CD8-positive, alpha-beta T cell (primary cell): ENCODE measurements at regions of chr2 and their contacts with region 1.

Region 1: DNA sequence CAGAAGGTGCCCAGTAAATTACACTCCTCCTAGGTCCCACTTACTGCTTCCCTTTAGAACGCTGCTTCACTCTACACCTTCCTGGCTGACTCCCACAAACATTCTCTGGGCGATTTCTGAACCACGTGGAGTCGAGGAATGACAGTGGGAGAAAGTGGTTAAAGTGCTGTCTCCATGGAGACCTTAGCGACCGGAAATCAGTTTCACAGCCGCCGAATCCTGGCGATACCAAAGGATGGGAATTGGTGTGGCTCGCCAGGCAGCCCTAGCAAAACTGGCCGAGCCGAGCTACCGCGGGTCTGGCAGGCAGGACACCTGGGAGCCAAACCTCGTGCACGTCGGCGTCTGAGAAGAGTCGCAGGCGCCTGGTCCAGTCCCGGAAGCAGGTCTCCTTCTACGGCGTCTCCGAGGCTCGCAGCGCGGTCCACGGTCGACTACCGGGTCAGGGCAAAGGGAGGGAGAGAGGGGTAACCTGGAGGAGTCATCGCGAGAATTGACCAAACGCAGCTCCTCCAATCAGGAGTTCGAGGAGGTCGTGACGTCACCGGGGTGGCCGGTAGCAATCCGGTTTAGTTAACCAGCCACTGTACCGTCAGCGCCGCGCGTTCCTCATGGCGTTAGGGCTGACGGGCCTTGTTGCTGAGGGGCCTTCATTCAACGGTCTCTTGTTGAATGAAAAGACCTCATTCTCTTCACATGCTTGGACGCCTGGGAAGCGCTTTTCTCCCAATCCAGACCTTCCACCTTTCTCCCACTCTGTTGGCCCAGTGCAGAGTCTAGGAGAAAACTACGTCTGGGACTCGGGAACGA is at the start of gene THADA:
- DNase-seq: peak; percentile 91 to 98 (median 96)
- ATAC-seq: peak; percentile 91
- H3K4me3 ChIP-seq: peak within 1 kb of the TSS; percentile 74 to 90
- H3K4me3 Mint-ChIP-seq: peak within 1 kb of the TSS; percentile 92
- H3K27ac ChIP-seq: peak within 1 kb of the TSS; percentile 86 to 87
- H3K27ac Mint-ChIP-seq: peak within 1 kb of the TSS; percentile 97
- H3K4me1 ChIP-seq: peaks cover 10% of the 10 kb centered on the region
- H3K4me1 Mint-ChIP-seq: peaks cover 33% of the 10 kb centered on the region
- H3K27me3 ChIP-seq: no peaks in the 10 kb centered on the region
- H3K27me3 Mint-ChIP-seq: no peaks in the 10 kb centered on the region
- CTCF ChIP-seq: no peak
- total RNA-seq, gene THADA: 28.5 to 28.6 TPM

Region 2: DNA sequence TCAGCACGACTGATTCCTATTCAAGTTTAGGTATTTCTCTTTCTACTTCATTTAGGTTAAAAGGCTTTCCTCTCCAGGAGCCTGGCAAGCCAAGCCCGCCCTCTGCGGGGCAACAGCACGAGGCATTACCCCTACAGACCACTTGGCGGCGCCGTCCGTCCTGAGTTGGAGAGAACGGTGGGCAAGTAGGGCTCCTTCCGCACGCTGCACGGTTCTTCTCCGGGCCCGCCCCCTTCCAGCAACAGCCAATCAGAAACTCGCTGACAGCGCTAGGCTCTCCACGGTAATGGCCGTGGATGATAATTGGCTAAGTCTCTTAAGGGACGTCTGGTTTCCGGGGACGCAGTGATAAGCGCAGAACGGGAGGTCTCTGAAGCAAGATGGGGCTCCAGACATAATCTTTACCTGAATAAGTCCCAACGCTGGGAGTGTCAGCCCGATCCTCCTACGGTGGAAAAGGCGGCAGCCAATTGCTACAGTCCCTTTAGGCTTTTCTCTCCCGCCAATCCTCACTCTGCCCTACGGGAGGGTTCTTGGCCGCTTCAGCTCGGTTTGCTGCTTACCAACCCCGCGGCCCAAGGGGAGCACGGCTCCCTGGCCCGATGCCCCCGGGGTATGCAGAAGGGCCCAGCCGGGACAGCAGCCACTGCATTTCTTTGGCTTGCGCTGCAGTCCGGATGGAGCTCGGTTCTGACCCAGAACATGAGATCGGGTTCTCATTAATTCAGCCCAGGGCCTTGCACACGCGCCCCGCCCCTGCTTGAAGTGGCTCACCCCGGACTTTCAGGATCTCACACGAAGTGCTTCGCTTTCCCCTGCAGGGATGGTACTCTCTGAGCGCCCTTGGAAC is 1754.9 kb before region 1 on chr2:
- CTCF ChIA-PET with region 1: no interaction called
- POLR2A ChIA-PET with region 1: no interaction called
- intact Hi-C with region 1: loop called in 1 of 2 experiments (anchors 5 kb)
- DNase-seq: peak; percentile 94 to 98 (median 97)
- ATAC-seq: peak; percentile 97
- H3K4me3 ChIP-seq: peak overlapping the region; percentile 74 to 81
- H3K4me3 Mint-ChIP-seq: peak overlapping the region; percentile 95
- H3K27ac ChIP-seq: peak overlapping the region; percentile 77 to 82
- H3K27ac Mint-ChIP-seq: peak overlapping the region; percentile 96
- H3K4me1 ChIP-seq: peaks cover 11% of the 10 kb centered on the region
- H3K4me1 Mint-ChIP-seq: peaks cover 14% of the 10 kb centered on the region
- H3K27me3 ChIP-seq: peaks cover 0 to 1% of the 10 kb centered on the region in 2 experiments
- H3K27me3 Mint-ChIP-seq: peaks cover 17% of the 10 kb centered on the region
- CTCF ChIP-seq: peak; percentile 95

Region 3: DNA sequence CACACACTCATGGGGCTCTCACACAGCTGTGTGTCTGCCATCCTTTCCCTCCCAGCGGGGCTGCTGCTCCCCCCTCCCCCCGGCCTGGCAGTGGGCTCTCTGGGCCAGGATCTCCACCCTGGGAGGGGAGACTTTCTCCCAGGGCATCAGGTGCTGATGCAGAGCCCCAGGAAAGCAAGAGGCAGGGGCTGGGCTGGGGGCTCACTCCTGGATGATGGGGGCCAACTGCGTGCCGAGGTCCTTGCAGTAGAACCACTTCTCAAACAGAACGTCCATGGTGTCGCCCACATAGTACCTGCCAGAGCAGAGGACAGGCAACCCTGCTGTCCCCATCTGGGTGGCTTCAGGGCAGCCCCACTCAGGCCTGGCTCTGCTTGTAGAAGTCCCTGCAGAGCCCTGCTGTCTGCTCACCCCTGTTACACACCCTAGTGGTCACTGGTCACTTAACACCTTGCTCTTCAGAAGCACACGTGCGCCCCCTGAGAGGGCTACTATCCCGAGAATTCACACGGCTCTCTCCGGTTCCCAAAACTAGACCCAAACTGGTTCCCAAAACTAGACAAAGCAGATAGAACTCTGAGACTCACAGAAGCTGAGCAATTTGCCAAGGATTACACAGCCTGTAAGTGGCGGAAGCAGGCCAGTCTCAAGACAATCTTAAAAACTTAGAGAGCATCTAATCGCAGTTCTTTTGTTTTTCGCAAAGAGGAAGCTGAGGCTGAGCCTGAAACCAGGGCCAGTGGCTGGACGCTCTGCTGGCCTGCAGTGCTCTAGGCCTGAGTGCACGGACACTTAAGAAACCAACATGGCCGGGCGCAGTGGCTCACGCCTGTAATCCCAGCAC is 825.3 kb before region 1 on chr2:
- CTCF ChIA-PET with region 1: no interaction called
- POLR2A ChIA-PET with region 1: no interaction called
- intact Hi-C with region 1: no loop called
- DNase-seq: peak in 1 of 9 experiments; percentile 26
- ATAC-seq: no peak
- H3K4me3 ChIP-seq: no peak overlapping the region
- H3K4me3 Mint-ChIP-seq: no peak overlapping the region
- H3K27ac ChIP-seq: no peak overlapping the region
- H3K27ac Mint-ChIP-seq: no peak overlapping the region
- H3K4me1 ChIP-seq: peaks cover 9% of the 10 kb centered on the region
- H3K4me1 Mint-ChIP-seq: peaks cover 10% of the 10 kb centered on the region
- H3K27me3 ChIP-seq: no peaks in the 10 kb centered on the region
- H3K27me3 Mint-ChIP-seq: no peaks in the 10 kb centered on the region
- CTCF ChIP-seq: no peak

Region 4: DNA sequence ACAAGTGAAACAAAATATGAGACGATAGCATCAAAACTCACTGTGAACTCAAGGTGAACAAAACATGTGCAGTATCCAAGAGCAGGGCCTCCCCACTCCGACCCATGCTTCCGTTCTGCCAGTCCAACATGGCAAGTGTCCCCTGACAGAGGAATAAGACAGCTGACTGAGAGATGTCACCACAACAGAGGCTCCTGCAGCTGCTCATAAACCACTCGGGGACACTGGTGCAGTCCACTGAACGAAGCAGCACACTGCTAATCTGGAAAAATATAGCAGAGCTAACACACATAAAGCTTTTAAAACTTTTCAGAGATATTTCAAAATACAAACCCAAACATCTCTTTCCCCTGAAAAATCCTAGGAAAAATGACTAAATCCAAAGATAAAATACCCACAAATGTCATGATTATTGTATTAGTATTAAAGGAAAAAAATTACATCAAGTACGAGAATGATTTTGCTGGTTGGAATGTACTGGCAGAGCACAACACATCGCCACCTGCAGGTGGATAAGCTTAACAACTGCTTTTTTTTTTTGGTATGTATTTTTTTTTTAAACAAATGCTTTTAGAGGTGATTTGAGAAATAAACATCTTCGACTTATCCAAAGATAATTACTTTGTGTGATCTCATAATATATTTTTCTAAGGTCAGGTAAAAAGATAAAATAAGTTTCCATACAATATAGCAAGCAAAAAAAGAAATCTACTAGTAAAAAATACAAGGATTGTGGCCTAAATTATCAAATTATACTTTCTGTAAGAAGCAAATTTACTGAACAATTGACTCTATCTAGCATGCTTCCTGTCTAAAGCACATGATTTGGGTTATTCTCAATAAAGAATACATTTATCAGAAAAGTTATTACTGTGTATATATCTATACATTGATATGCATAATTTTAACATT is 18.6 kb before region 1 on chr2:
- CTCF ChIA-PET with region 1: interaction called, 23 read pairs
- POLR2A ChIA-PET with region 1: interaction called, 5 read pairs
- intact Hi-C with region 1: no loop called
- DNase-seq: peak in 4 of 9 experiments; percentile 20 to 74 (median 50)
- ATAC-seq: peak; percentile 63
- H3K4me3 ChIP-seq: no peak overlapping the region
- H3K4me3 Mint-ChIP-seq: no peak overlapping the region
- H3K27ac ChIP-seq: no peak overlapping the region
- H3K27ac Mint-ChIP-seq: no peak overlapping the region
- H3K4me1 ChIP-seq: no peaks in the 10 kb centered on the region
- H3K4me1 Mint-ChIP-seq: peaks cover 3% of the 10 kb centered on the region
- H3K27me3 ChIP-seq: no peaks in the 10 kb centered on the region
- H3K27me3 Mint-ChIP-seq: no peaks in the 10 kb centered on the region
- CTCF ChIP-seq: peak; percentile 86

Region 5: GRCh38 chr2:43611987-43612894 is 16.4 kb after region 1 on chr2:
- CTCF ChIA-PET with region 1: interaction called, 21 read pairs
- POLR2A ChIA-PET with region 1: interaction called, 4 read pairs
- intact Hi-C with region 1: loop called in 1 of 2 experiments (anchors 2 kb)
- DNase-seq: peak; percentile 52 to 81 (median 72)
- ATAC-seq: peak; percentile 99
- H3K4me3 ChIP-seq: no peak overlapping the region
- H3K4me3 Mint-ChIP-seq: no peak overlapping the region
- H3K27ac ChIP-seq: no peak overlapping the region
- H3K27ac Mint-ChIP-seq: no peak overlapping the region
- H3K4me1 ChIP-seq: no peaks in the 10 kb centered on the region
- H3K4me1 Mint-ChIP-seq: no peaks in the 10 kb centered on the region
- H3K27me3 ChIP-seq: no peaks in the 10 kb centered on the region
- H3K27me3 Mint-ChIP-seq: peaks cover 7% of the 10 kb centered on the region
- CTCF ChIP-seq: peak; percentile 74

Region 6: DNA sequence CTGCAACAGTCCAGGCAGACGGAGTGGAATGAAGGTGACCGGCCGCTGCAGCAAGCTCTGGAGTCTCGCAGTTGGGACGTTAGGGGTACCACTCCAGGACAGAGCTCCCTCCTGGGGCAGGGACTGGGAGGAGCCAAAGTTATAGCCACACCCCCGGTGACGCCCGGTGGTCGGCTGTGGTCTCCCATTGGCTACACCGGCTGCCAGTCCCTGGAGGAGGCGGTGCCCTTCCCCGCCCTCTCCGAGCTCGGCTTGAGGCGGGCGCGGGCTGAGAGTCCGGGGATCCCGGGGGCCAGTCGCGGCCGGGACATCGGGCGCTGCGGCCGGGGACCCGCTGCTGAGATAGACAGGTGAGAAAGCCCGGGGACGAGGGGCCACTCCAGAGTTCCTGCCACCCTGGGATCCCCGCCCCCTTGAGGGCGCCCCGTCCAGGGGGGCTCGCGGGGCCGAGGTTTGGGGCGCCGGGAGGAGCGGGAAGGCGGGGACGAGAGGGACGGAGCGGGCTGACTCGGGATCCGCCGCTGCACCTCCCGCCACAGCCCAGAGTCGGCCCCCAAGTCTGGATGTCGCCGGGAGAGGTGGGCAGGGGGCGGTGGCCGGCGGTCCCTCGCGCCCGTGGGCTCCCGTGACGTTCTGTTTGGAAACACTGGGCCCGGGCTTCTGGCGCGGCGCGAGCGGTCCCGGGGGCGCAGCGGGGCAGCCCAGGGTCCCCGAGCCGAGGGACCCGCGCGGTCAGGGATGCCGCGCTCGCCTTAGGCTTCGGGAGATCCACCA is 41.4 kb after region 1 on chr2 and contains the start of gene PLEKHH2:
- CTCF ChIA-PET with region 1: no interaction called
- POLR2A ChIA-PET with region 1: interaction called, 5 read pairs
- intact Hi-C with region 1: loop called in 1 of 2 experiments (anchors 5 kb)
- DNase-seq: peak; percentile 75 to 91 (median 87)
- ATAC-seq: peak; percentile 100
- H3K4me3 ChIP-seq: peak within 1 kb of the TSS; percentile 49 to 67
- H3K4me3 Mint-ChIP-seq: peak within 1 kb of the TSS; percentile 87
- H3K27ac ChIP-seq: peak within 1 kb of the TSS in 1 of 2 experiments; percentile 3
- H3K27ac Mint-ChIP-seq: no peak within 1 kb of the TSS
- H3K4me1 ChIP-seq: peaks cover 8% of the 10 kb centered on the region
- H3K4me1 Mint-ChIP-seq: peaks cover 17% of the 10 kb centered on the region
- H3K27me3 ChIP-seq: peaks cover 0 to 4% of the 10 kb centered on the region in 2 experiments
- H3K27me3 Mint-ChIP-seq: peaks cover 37% of the 10 kb centered on the region
- CTCF ChIP-seq: no peak
- total RNA-seq, gene PLEKHH2: 1.5 to 1.7 TPM

Region 7: DNA sequence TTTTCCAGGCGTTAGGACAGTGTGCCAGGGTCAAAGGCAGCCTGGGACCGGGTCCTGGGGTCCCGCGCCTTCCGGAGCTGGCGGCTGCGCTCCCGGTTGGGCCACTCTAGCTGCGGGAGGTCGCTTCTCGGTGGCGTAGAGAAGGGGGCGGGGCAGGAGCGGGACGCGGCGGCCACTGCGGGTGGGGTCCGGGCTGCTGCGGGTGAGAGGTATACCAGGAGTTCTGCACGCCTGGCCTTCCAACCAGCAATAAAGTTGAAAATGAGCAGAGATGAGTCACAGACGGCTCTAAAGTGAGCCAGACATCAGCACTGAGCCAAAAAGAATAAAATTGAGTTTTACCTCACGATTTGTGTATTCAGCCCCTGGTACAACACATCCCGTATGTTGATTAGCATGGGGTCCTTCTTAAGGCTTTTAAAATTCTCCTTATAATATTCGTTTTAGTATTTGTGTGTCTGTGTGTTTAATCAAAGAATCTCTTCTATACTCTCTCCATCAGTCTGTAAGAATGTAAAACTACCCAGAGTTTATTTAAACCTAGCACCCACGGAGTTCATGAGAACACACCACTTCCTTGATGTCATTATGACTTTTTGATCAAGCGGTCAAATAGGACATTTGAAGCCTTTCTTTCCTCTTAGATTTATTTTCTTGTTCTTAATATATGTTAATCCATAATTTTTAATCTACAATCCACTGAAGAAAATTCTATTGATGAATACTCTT is 80.7 kb after region 1 on chr2 and contains the start of gene C1GALT1C1L:
- CTCF ChIA-PET with region 1: no interaction called
- POLR2A ChIA-PET with region 1: no interaction called
- intact Hi-C with region 1: no loop called
- DNase-seq: peak in 7 of 9 experiments; percentile 5 to 51 (median 21)
- ATAC-seq: no peak
- H3K4me3 ChIP-seq: peak within 1 kb of the TSS; percentile 26 to 35
- H3K4me3 Mint-ChIP-seq: peak within 1 kb of the TSS; percentile 65
- H3K27ac ChIP-seq: no peak within 1 kb of the TSS
- H3K27ac Mint-ChIP-seq: no peak within 1 kb of the TSS
- H3K4me1 ChIP-seq: no peaks in the 10 kb centered on the region
- H3K4me1 Mint-ChIP-seq: peaks cover 4% of the 10 kb centered on the region
- H3K27me3 ChIP-seq: peaks cover 0 to 2% of the 10 kb centered on the region in 2 experiments
- H3K27me3 Mint-ChIP-seq: peaks cover 27% of the 10 kb centered on the region
- CTCF ChIP-seq: no peak
- total RNA-seq, gene C1GALT1C1L: not detected

Region 8: GRCh38 chr2:43773876-43774613 is 178.2 kb after region 1 on chr2 and contains the start of gene DYNC2LI1:
- CTCF ChIA-PET with region 1: no interaction called
- POLR2A ChIA-PET with region 1: no interaction called
- intact Hi-C with region 1: loop called in 1 of 2 experiments (anchors 10 kb)
- DNase-seq: peak; percentile 38 to 86 (median 70)
- ATAC-seq: peak; percentile 92
- H3K4me3 ChIP-seq: peak within 1 kb of the TSS; percentile 89 to 97
- H3K4me3 Mint-ChIP-seq: peak within 1 kb of the TSS; percentile 96
- H3K27ac ChIP-seq: peak within 1 kb of the TSS; percentile 48 to 54
- H3K27ac Mint-ChIP-seq: peak within 1 kb of the TSS; percentile 80
- H3K4me1 ChIP-seq: no peaks in the 10 kb centered on the region
- H3K4me1 Mint-ChIP-seq: peaks cover 15% of the 10 kb centered on the region
- H3K27me3 ChIP-seq: no peaks in the 10 kb centered on the region
- H3K27me3 Mint-ChIP-seq: peaks cover 8% of the 10 kb centered on the region
- CTCF ChIP-seq: no peak
- total RNA-seq, gene DYNC2LI1: 1.4 to 1.8 TPM

Region 9: DNA sequence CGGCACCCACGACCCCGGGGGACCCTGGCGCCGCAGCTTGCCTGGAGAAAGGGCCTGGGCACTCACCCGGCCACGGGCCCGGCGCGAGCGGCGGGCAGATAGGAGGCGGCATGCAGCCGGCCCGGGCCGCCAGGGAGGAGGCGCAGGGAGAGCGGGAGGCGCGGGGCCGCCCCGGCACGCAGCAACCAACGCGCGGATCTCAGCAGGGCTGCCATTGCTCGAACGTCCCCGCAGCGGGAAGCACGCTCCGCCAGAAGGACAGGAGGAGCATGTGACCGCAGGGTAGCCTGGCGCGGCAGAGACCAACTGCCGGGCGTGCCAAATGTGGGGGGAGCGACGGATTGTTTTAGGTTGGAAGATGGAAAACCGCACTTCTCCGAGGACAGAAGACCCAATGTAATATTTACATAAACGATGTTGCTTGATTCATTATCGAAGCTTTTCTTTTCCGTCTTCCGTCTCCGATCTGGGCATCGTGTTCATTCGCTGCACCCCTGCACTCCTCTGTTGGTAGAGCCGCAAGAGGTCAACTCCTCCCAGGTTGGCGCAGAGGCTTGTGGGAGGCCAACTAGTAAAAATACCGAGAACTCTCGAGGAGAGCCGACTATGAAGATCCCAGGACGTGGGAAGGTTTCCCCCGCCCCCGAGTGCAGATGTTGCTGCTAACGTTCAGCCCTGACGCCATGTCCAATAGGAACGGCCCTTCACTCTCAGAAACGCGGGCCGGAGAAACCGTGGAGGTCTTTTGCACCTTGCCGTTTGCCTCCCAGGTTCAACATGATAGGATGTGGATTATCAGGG is 400.1 kb after region 1 on chr2 and contains the start of gene LRPPRC:
- CTCF ChIA-PET with region 1: no interaction called
- POLR2A ChIA-PET with region 1: no interaction called
- intact Hi-C with region 1: loop called in 1 of 2 experiments (anchors 5 kb)
- DNase-seq: peak; percentile 77 to 96 (median 90)
- ATAC-seq: peak; percentile 96
- H3K4me3 ChIP-seq: peak within 1 kb of the TSS; percentile 78 to 94
- H3K4me3 Mint-ChIP-seq: peak within 1 kb of the TSS; percentile 91
- H3K27ac ChIP-seq: peak within 1 kb of the TSS; percentile 65 to 91
- H3K27ac Mint-ChIP-seq: peak within 1 kb of the TSS; percentile 96
- H3K4me1 ChIP-seq: peaks cover 36% of the 10 kb centered on the region
- H3K4me1 Mint-ChIP-seq: peaks cover 51% of the 10 kb centered on the region
- H3K27me3 ChIP-seq: no peaks in the 10 kb centered on the region
- H3K27me3 Mint-ChIP-seq: peaks cover 2% of the 10 kb centered on the region
- CTCF ChIP-seq: no peak
- total RNA-seq, gene LRPPRC: 62.8 to 67.2 TPM